ENCODE measurements at regions of chr12 and their contacts with region 1.

Region 1: DNA sequence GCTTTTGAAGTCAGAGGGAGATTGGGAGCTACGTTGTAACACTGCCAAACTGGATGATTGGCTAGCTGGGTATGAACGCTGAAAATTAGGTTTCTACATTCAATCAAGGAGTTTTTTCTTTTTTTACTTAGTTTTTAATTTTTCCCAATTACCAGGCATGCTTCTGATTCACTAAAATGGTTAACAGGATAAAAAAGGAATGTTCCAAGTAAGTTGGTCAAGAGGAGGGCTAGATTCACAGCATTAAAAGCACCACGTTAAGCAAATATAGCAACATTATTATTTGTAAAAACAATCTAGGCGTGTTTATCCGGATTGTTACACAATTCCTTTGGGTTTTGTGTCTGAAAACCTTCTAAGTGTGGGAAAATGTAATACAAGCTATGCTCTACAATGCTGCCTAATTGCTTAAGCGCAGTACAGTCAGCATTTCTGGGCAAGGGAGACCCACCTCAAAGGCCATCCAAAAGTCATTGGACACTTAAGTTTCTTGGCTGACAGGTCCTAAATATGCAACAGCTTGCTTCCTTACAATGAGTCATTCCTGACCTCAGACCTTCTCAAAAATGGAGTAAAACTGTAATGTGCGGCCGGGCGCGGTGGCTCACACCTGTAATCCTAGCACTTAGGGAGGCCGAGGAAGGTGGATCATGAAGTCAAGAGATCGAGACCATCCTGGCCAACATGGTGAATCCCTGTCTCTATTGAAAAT is 1.2 kb downstream of the RPLP0 start:
- H3K4me3 ChIP-seq: peak overlapping the region; percentile 94
- H3K27ac ChIP-seq: peak overlapping the region; percentile 60
- H3K4me1 ChIP-seq: peaks cover 4% of the 10 kb centered on the region
- CTCF ChIP-seq: no peak

Region 2: GRCh38 chr12:120086801-120087621 is 112.7 kb before region 1 on chr12:
- CTCF ChIA-PET with region 1: no interaction called
- POLR2A ChIA-PET with region 1: interaction called, 13 read pairs
- H3K4me3 ChIP-seq: peak overlapping the region; percentile 40
- H3K27ac ChIP-seq: no peak overlapping the region; the same call in 1 of the 2 replicates
- H3K4me1 ChIP-seq: peaks cover 2% of the 10 kb centered on the region; the same call in 1 of the 2 replicates
- CTCF ChIP-seq: peak; percentile 99

Region 3: DNA sequence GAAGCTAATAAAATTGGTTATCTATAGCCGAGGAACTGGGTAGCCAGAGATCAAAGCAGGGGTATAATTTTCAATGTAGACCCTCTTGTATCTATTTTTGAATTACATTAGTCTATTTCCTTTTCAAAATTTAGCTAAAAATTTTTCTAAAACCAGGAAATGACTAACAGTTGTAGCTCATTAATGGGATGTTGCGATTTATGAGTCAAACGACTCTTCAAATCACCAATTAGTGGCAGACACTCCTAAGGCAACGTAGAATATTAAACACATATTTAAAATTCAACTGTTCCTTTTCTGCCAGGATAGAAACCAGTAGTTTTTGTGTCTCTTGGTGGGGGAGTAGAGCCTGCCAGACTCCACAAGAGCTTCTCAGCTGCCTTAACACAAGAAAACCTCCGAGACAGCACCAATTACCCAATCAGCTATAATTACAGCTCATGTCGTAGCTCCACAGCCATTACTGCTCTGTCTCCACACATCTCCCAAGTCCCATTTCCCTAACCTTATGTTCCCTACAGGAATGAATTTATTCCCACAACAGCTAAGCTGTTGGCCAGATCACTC is 32.1 kb before region 1 on chr12:
- CTCF ChIA-PET with region 1: no interaction called
- POLR2A ChIA-PET with region 1: interaction called, 12 read pairs
- H3K4me3 ChIP-seq: no peak overlapping the region
- H3K27ac ChIP-seq: no peak overlapping the region
- H3K4me1 ChIP-seq: no peaks in the 10 kb centered on the region
- CTCF ChIP-seq: no peak

Region 4: GRCh38 chr12:120228291-120229070 is 28.7 kb after region 1 on chr12:
- CTCF ChIA-PET with region 1: interaction called, 62 read pairs
- POLR2A ChIA-PET with region 1: interaction called, 163 read pairs
- H3K4me3 ChIP-seq: no peak overlapping the region
- H3K27ac ChIP-seq: peak overlapping the region; percentile 4; the same call in 1 of the 2 replicates
- H3K4me1 ChIP-seq: peaks cover 42% of the 10 kb centered on the region
- CTCF ChIP-seq: peak; percentile 94

Region 5: DNA sequence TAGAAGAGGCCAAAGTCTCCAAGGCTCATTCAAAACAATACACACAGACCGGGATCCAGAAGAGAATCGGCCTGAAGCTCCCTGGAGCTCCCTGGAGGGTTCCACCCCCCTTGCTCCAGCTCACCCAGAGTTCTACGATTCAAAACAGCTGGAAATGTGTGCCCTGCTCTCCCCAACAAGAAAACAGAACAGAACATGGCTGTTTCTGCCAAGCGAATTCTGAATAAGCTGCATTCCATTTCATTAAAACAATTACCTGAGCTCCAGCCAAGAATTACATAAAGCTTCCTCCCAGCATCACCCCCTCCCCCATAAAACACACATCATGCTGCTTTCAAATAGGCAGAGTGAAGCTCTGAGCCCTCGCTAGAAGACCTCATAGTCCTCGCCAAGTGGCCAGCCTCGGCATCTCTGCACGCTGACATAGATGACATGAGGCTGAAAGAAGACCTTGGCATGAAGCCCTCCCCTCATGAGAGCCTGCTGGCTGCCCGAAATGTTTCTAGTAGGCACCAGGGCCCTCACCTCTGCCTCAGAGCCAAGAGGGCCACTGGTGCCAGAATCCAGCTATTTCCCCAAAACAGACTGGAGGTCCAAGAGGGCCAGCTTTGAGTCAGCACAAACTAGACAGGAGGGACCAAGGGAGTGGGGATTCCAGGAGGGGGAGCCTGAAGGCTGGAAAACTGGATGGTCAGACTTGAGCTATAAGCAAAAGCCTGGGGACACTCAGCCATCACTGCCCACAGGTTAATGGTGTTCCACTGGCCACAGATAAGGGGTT is 57.5 kb after region 1 on chr12:
- CTCF ChIA-PET with region 1: interaction called, 6 read pairs
- POLR2A ChIA-PET with region 1: interaction called, 98 read pairs
- H3K4me3 ChIP-seq: no peak overlapping the region
- H3K27ac ChIP-seq: no peak overlapping the region
- H3K4me1 ChIP-seq: peaks cover 5% of the 10 kb centered on the region; the same call in 1 of the 2 replicates
- CTCF ChIP-seq: 0 out of 2 replicates have a peak, but pooled peaks have one; percentile 11

Region 6: DNA sequence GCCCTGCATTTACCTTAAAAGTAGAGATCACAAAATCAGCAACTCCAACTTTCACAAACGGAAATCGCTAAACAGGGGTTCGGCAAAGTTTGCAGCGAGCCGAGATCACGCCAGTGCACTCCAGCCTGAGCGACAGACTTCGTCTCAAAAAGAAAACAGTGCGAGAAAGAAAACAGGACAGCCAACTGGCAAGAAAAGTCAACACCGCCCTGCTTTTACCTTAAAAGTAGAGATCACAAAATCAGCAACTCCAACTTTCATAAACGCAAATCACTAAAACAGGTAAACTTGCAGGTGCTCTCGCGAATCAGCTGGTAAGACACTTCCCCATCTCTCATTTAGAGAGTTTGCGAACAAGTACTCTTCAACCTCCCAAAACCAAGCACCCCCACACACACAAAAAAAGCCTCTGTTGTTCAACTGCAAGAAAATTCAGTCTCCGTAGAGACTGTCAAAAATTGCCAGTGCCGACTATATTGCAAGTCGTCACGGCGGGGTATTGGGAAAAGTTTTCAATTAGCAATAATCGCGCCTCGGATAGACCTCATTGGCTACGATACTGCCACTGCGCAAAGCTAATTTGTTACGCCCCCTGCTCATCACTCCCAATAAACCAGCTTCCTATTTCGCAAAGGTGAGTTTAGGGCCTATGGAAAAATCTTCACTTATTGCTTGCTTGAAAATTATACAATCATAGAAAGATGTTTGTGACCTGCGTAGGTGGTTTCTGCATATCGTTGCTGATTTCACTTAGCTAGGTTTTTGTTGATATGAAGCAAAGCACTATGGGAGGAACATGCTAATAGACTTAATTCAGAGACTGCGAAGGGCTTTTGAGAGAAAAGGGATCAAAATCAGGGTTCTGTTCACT is 93.1 kb after region 1 on chr12 and contains the start of gene RNU4-1:
- CTCF ChIA-PET with region 1: interaction called, 5 read pairs
- POLR2A ChIA-PET with region 1: interaction called, 131 read pairs
- H3K4me3 ChIP-seq: peak within 1 kb of the TSS; percentile 63
- H3K27ac ChIP-seq: peak within 1 kb of the TSS; percentile 100
- H3K4me1 ChIP-seq: no peaks in the 10 kb centered on the region
- CTCF ChIP-seq: no peak

Region 7: GRCh38 chr12:120402217-120402616 is 202.5 kb after region 1 on chr12:
- CTCF ChIA-PET with region 1: no interaction called
- POLR2A ChIA-PET with region 1: no interaction called
- H3K4me3 ChIP-seq: no peak overlapping the region
- H3K27ac ChIP-seq: peak overlapping the region; percentile 25; the same call in 1 of the 2 replicates
- H3K4me1 ChIP-seq: peaks cover 3% of the 10 kb centered on the region; the same call in 1 of the 2 replicates
- CTCF ChIP-seq: no peak